AG04449 (cell line): ENCODE measurements at regions of chr5 and their contacts with region 1.

Region 1: DNA sequence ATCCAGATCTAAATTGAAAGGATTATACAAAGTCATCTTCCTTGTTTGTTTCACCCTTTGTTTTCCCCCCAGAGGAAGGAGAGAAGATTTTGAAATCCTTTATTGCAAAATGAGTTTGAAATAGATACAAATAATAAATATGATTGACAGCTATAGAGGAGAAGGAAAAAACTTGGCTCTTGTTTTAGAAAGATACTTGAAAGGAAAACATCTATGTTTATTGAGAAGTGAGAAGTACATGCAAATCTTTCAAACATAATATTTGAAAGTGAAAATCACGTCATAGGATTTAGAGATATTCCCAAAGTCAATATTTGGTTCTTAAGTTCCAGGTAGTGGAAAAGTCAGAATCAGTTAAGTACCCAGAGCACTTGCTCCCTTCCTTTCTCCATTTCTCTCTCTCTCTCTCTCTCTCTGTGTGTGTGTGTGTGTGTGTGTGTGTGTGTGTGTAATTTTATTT is 27.2 kb downstream of the PAM start:
- DNase-seq: no peak
- H3K4me3 ChIP-seq: no peak overlapping the region
- CTCF ChIP-seq: no peak

Region 2: GRCh38 chr5:102771435-102771834 is 10.9 kb before region 1 on chr5:
- CTCF ChIA-PET with region 1: interaction called, 12 read pairs
- POLR2A ChIA-PET with region 1: no interaction called
- DNase-seq: no peak
- H3K4me3 ChIP-seq: no peak overlapping the region
- CTCF ChIP-seq: no peak

Region 3: DNA sequence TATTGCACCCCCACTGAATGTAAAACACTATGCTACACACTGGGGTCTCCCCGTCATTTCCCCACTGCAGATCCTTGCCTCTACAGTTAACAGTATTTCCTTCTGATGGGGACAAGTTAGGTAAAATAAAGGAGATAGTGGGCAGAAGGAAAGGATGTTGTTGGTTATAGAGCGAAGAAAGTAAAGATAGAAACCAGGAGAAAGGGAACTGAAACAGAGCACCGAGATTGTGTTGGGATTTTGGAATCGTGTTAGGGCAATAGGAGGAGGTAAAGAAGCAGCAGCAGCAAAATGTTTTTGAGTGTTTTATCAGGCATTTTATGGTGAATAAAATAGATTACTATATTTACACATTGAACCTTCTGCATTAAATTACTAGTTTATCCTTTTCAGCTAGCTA is 32.7 kb after region 1 on chr5:
- CTCF ChIA-PET with region 1: interaction called, 10 read pairs
- POLR2A ChIA-PET with region 1: no interaction called
- DNase-seq: no peak
- H3K4me3 ChIP-seq: no peak overlapping the region
- CTCF ChIP-seq: no peak

Region 4: DNA sequence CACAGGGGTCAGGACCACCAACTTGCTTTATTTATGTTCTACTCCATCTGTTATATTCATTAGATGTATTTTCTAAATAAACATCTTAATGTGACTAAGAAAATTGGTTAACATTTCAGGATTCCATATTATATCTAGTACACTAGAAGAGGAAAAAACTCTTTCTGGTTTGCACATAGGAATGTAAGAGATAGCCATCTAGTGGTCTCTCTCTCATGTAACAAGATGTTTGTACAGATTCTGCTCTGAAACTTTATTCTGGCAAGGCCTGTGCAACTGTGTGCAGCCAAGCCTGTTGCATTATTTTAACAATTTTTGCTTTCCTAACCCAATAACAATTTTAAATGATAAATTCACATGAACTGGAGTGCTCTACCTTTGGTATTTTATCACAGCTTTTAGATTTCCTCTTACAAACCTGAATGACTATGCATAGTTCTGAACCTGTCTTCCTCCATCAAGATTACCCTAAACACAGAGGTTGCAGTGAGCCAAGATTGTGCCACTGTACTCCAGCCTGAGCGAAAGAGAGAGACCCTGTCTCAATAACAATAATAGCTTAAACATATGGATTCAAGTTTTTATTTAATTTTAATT is 189.5 kb after region 1 on chr5:
- CTCF ChIA-PET with region 1: interaction called, 42 read pairs
- POLR2A ChIA-PET with region 1: no interaction called
- DNase-seq: peak; percentile 23
- H3K4me3 ChIP-seq: no peak overlapping the region
- CTCF ChIP-seq: peak; percentile 42

Region 5: DNA sequence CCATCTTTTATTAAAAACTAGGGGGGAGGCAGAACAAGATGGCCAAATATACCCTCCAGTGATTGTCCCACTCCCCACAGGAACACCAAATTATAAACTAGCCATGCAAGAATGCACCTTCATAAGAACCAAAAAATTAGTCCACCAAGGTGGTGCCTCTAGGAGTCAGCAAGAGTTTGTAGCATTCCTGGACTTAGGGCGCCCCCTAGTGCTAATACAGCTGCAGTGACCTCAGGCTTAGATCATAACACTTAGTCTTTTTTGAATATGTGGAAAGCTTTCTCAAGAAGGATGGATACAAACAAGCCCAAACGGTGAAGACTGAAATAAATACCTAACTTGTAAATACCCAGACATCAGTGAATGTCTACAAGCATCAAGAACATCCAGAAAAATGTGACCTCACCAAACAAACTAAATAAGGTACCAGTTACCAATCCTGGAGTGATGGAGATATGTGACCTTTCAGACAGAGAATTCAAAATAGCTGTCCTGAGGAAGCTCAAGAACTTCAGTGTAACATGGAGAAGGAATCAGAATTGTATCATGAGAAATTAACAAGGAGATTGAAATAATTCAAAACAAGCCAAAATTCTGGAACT is 357.0 kb after region 1 on chr5:
- CTCF ChIA-PET with region 1: interaction called, 12 read pairs
- POLR2A ChIA-PET with region 1: no interaction called
- DNase-seq: peak; percentile 9
- H3K4me3 ChIP-seq: no peak overlapping the region
- CTCF ChIP-seq: peak; percentile 88